ENCODE measurements at regions of chr2 and their contacts with region 1.

Region 1: DNA sequence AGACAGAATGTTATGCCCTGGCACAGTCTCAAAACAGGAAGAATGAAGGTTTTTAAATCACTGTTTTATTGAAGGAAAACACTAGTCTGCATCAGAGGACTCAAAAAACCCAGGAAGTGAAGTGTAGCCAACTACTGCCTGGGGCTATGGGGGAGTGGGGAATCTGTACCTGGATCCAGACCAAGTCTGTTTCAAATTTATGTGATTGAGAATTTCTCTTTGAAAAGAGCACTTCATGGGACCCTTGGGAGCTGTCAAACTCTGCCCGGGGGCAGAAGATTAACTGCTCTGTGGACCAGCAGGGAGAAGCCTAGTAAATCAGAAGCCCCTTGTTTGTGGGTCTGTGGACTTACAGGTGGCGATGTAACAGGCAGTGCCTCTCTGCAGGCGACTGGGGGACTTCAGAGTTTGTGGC is 45.3 kb upstream of the TANC1 start:
- DNase-seq: no peak
- CTCF ChIP-seq: no peak

Region 2: GRCh38 chr2:159146996-159147666 is 223.9 kb after region 1 on chr2:
- in situ Hi-C with region 1: loop called (anchors 25 kb)
- DNase-seq: no peak
- CTCF ChIP-seq: no peak

Region 3: GRCh38 chr2:159968279-159968900 is 1045.2 kb after region 1 on chr2:
- in situ Hi-C with region 1: loop called (anchors 25 kb)
- DNase-seq: peak; percentile 34
- CTCF ChIP-seq: peak; percentile 79

Measured in GM13977 (cell line).